ENCODE measurements at regions of chr4 and their contacts with region 1.

Region 1: DNA sequence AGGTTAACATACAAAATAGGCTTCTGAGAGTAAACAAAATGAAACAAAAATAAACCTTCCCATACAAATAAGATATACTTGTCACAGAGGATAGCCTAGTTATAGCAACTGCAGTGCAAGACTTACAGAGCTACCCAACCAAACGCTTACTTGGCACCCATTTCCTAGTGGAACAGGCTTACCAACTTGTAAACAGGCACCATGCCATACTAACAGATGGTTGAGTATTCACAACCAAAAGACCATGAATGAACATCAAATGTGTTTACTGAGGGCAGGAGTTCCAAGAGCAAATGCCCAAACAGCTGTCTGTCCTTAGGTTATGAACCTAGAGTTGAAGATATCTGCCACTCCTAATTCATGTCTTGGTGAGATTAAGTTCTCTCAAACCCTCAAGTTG is 2629.2 kb downstream of the PCDH7 start:
- H3K4me3 Mint-ChIP-seq: no peak overlapping the region
- H3K27ac Mint-ChIP-seq: no peak overlapping the region
- H3K4me1 Mint-ChIP-seq: no peaks in the 10 kb centered on the region
- H3K27me3 Mint-ChIP-seq: no peaks in the 10 kb centered on the region

Region 2: GRCh38 chr4:33369446-33369845 is 20.1 kb after region 1 on chr4:
- intact Hi-C with region 1: loop called (anchors 1 kb)
- H3K4me3 Mint-ChIP-seq: no peak overlapping the region
- H3K27ac Mint-ChIP-seq: no peak overlapping the region
- H3K4me1 Mint-ChIP-seq: no peaks in the 10 kb centered on the region
- H3K27me3 Mint-ChIP-seq: no peaks in the 10 kb centered on the region